Common myeloid progenitor, CD34-positive (primary cell): ENCODE measurements at regions of chr12 and their contacts with region 1.

Region 1: DNA sequence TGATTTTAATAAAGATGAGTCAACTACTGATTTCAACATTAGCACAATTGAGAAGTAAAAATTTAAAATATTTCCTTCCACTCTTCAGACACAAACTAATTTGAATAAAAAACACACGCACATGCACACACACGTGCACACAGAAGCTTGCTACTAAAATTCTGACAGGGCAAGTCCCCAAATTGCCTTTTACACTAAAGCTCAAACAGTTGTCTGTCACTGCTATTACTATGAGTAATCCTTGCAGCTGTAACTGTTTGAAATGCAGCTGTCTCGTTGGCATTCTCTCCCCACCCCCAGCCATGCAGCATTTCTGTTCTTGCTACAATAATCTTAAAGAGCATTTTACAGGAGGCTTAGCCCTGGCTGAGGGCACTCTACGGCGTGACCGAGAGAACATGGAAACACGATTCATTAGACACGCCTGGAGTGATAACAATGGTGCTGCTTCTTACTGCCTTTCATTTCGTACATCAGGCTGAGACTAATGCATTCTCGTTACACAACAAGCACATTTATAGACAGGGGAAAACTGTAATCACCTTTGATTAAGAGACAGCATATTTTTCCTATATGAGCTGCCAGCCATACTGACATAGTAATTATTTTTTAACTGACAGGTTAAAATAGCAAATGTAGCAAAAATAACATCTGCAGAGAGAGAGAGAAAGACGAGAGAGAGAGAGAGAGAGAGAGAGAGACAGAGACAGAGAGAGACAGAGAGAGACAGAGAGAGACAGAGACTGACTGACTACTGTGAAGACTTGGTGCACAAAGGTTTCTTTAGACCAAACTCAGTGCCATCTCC is 153.8 kb downstream of the MED13L start:
- DNase-seq: peak in 2 of 3 donors; percentile 44 to 56
- H3K4me3 ChIP-seq: no peak overlapping the region
- H3K27ac ChIP-seq: no peak overlapping the region
- H3K4me1 ChIP-seq: peaks cover 8 to 35% (median 15%) of the 10 kb centered on the region in 4 experiments
- H3K27me3 ChIP-seq: no peaks in the 10 kb centered on the region

Region 2: GRCh38 chr12:116106870-116107269 is 16.8 kb before region 1 on chr12:
- CTCF ChIA-PET with region 1: interaction called, 10 read pairs
- POLR2A ChIA-PET with region 1: no interaction called
- DNase-seq: no peak
- H3K4me3 ChIP-seq: no peak overlapping the region
- H3K27ac ChIP-seq: no peak overlapping the region
- H3K4me1 ChIP-seq: peaks cover 0 to 2% (median 0%) of the 10 kb centered on the region in 4 experiments
- H3K27me3 ChIP-seq: no peaks in the 10 kb centered on the region